ENCODE measurements at regions of chr5 and their contacts with region 1.

Region 1: DNA sequence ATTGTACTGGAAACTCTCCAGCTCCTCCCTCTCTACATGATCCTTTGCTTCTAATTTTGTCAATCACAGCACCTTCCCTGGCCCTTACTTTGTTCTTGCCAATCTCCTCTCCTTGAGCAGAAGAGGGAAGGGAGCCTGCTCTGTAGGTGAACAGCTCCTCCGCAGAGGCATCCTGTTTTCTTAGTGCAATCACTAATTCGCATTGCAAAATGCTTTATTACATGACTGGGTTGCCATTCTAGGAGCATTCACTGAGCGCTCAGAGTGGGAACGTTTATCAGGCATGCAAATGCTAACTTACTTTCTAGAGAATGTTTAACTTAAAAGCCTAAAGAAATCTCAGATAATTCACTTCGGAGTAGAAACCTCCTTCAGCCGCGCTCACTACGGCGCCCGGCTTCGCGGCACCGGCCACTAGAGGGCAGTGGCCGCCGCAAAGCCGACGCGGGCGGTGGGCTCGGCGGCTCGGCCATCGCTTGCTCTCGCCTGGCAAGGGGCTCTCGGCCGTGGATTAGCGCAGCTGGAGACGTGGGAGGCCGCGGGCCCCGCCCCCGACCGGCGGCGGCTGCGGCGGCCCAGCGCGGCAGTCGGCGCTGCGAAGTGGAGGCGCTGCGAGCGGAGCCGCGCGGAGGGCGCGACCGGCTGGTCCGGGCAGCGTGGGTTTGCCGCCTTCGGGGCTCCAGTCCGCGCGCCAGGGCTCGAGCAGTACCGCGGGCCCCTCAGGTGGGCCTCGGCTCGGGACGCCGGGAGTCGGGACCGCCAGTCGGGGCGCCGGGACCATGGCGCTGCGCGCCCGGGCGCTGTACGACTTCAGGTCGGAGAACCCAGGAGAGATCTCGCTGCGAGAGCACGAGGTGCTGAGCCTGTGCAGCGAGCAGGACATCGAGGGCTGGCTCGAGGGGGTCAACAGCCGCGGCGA is at the start of gene SNX18:
- DNase-seq: peak; percentile 94 to 96 (median 95)
- ATAC-seq: peak; percentile 82 to 94 (median 92)
- H3K4me3 ChIP-seq: peak within 1 kb of the TSS; percentile 88 to 100 (median 97)
- H3K27ac ChIP-seq: peak within 1 kb of the TSS; percentile 95 to 99 (median 98)
- H3K4me1 ChIP-seq: peaks cover 0 to 45% (median 26%) of the 10 kb centered on the region in 12 donors
- H3K27me3 ChIP-seq: no peaks in the 10 kb centered on the region
- CTCF ChIP-seq: peak; percentile 95 to 100 (median 98)
- POLR2A ChIP-seq: peak in 1 of 2 donors; percentile 78
- total RNA-seq, gene SNX18: 18.8 to 39.6 (median 23.4) TPM

Region 2: DNA sequence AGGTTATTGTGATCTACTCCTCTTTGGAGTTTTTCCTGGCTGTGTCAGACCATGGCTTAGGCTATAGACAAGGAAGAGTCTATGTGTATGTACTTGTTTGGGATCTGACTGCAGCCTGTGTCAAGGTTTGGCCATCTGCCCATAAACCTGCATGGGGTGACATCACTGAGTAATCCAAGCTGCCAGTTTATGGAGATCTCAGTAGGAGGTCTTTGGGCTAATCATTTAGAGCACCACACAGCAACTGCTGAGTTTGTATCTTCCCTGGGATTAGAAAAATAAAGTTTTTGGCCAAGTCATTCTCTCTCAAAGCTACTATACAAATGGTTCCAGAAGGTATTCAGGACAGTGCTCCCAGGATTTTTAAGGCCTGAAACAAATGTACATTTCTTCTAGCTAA is 127.4 kb before region 1 on chr5:
- intact Hi-C with region 1: no loop called
- DNase-seq: peak in 2 of 5 donors; percentile 12 to 41
- ATAC-seq: peak in 1 of 4 donors; percentile 37
- H3K4me3 ChIP-seq: no peak overlapping the region
- H3K27ac ChIP-seq: peak overlapping the region in 2 of 12 donors; percentile 16 to 66
- H3K4me1 ChIP-seq: peaks cover 0 to 48% (median 14%) of the 10 kb centered on the region in 12 donors
- H3K27me3 ChIP-seq: no peaks in the 10 kb centered on the region
- CTCF ChIP-seq: no peak
- POLR2A ChIP-seq: no peak

Region 3: DNA sequence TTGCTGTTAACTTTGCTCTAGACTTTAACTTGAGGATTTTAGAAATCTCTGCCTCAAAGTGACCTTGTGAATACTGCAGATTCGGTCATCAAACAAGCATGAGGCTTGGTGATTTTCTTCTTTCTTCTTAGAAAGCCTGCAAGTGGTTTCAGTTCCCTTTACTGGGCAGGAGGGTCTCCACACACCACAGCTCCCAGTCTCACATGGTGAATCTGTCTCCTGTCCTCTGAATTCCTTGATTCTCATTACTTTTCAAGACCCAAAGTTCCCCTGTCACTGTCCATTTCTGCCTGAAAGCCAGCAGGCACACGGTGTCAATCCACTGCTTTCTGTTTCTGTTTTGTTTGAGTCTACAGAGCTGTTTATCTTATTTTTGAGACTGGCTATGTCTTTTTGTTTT is 47.8 kb before region 1 on chr5:
- intact Hi-C with region 1: no loop called
- DNase-seq: no peak
- ATAC-seq: peak in 2 of 4 donors; percentile 38 to 47
- H3K4me3 ChIP-seq: peak overlapping the region in 9 of 12 donors; percentile 1 to 52 (median 33)
- H3K27ac ChIP-seq: peak overlapping the region in 10 of 12 donors; percentile 25 to 70 (median 52)
- H3K4me1 ChIP-seq: peaks cover 0 to 30% (median 12%) of the 10 kb centered on the region in 12 donors
- H3K27me3 ChIP-seq: no peaks in the 10 kb centered on the region
- CTCF ChIP-seq: no peak
- POLR2A ChIP-seq: no peak

Region 4: DNA sequence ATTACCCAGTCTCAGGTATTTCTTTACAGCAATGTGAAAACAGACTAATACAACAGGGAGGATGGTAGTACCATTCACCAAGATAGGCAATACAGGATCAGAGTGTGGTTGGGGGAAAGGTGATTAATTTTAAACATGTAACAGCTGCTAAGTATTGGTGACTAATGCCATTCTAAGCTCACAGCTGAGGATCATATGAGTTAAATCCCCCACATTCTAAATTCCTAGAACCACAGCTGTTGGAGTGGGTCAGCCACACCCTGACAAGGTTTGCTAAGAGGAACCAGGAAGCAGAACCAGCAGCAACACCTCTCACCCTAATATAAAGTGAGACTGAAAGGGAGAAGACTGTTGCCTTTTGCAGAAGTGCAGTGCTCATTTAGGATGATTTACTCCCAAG is 37.1 kb before region 1 on chr5:
- intact Hi-C with region 1: no loop called
- DNase-seq: no peak
- ATAC-seq: no peak
- H3K4me3 ChIP-seq: no peak overlapping the region
- H3K27ac ChIP-seq: no peak overlapping the region
- H3K4me1 ChIP-seq: peaks cover 0 to 2% (median 0%) of the 10 kb centered on the region in 12 donors
- H3K27me3 ChIP-seq: no peaks in the 10 kb centered on the region
- CTCF ChIP-seq: no peak
- POLR2A ChIP-seq: no peak

Region 5: GRCh38 chr5:54558362-54558761 is 40.9 kb after region 1 on chr5:
- intact Hi-C with region 1: loop called in 1 of 10 experiments (anchors 5 kb)
- DNase-seq: no peak
- ATAC-seq: peak; percentile 51 to 92 (median 68)
- H3K4me3 ChIP-seq: no peak overlapping the region
- H3K27ac ChIP-seq: peak overlapping the region in 10 of 12 donors; percentile 3 to 37 (median 8)
- H3K4me1 ChIP-seq: peaks cover 0 to 13% (median 0%) of the 10 kb centered on the region in 12 donors
- H3K27me3 ChIP-seq: no peaks in the 10 kb centered on the region
- CTCF ChIP-seq: no peak
- POLR2A ChIP-seq: no peak

Region 6: GRCh38 chr5:54658014-54658413 is 140.6 kb after region 1 on chr5:
- intact Hi-C with region 1: loop called in 2 of 10 experiments (anchors 5 kb)
- DNase-seq: peak in 2 of 5 donors; percentile 49 to 61
- ATAC-seq: peak in 1 of 4 donors; percentile 67
- H3K4me3 ChIP-seq: no peak overlapping the region
- H3K27ac ChIP-seq: peak overlapping the region in 2 of 12 donors; percentile 17 to 41
- H3K4me1 ChIP-seq: peaks cover 0 to 25% (median 9%) of the 10 kb centered on the region in 12 donors
- H3K27me3 ChIP-seq: no peaks in the 10 kb centered on the region
- CTCF ChIP-seq: no peak
- POLR2A ChIP-seq: no peak

Region 7: GRCh38 chr5:54719384-54720283 is 202.2 kb after region 1 on chr5:
- intact Hi-C with region 1: loop called in 3 of 10 experiments (anchors 5 kb)
- DNase-seq: peak in 4 of 5 donors; percentile 53 to 81 (median 66)
- ATAC-seq: peak; percentile 85 to 93 (median 90)
- H3K4me3 ChIP-seq: no peak overlapping the region
- H3K27ac ChIP-seq: peak overlapping the region; percentile 46 to 89 (median 71)
- H3K4me1 ChIP-seq: peaks cover 0 to 35% (median 23%) of the 10 kb centered on the region in 12 donors
- H3K27me3 ChIP-seq: no peaks in the 10 kb centered on the region
- CTCF ChIP-seq: peak in 1 of 12 donors; percentile 20
- POLR2A ChIP-seq: no peak

Region 8: GRCh38 chr5:54774281-54775170 is 257.1 kb after region 1 on chr5:
- intact Hi-C with region 1: loop called in 1 of 10 experiments (anchors 10 kb)
- DNase-seq: peak; percentile 66 to 84 (median 72)
- ATAC-seq: peak; percentile 88 to 97 (median 95)
- H3K4me3 ChIP-seq: peak overlapping the region in 2 of 12 donors; percentile 7 to 20
- H3K27ac ChIP-seq: peak overlapping the region in 4 of 12 donors; percentile 45 to 62 (median 47)
- H3K4me1 ChIP-seq: peaks cover 0 to 15% (median 0%) of the 10 kb centered on the region in 12 donors
- H3K27me3 ChIP-seq: no peaks in the 10 kb centered on the region
- CTCF ChIP-seq: no peak
- POLR2A ChIP-seq: no peak

Region 9: DNA sequence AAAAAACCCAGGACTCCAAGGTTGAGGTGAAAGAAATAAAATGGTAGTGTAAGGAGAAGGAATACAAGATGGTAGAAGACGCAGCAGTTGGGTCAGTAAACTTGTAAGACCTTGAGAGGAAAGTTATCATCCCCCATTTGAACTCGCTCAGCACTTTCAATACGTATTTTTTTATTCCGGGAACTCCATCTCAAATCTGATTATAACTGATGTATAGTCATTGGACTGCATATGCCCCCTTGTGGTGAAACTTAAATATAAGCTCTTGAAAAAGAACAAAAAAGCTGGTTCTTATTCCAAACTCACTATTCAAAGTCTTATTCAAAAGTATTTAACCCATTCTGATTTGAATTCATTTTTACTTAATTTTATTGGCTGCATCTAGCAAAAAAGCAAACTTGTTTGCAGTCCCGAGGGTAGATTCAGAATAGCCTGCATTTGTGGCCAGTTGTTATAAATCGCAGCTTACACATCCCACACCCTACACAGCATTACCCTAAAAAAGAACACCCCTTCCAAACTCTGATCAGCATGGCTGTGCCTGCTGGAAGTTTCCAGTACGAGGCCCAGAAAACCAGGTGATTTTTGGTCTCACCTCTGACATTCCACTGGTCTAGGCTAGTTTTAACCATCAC is 350.0 kb after region 1 on chr5:
- intact Hi-C with region 1: loop called in 9 of 10 experiments (anchors 1 to 5 kb)
- DNase-seq: no peak
- ATAC-seq: peak in 2 of 4 donors; percentile 36 to 45
- H3K4me3 ChIP-seq: peak overlapping the region in 7 of 12 donors; percentile 4 to 46 (median 19)
- H3K27ac ChIP-seq: no peak overlapping the region
- H3K4me1 ChIP-seq: peaks cover 0 to 7% (median 0%) of the 10 kb centered on the region in 12 donors
- H3K27me3 ChIP-seq: no peaks in the 10 kb centered on the region
- CTCF ChIP-seq: peak; percentile 58 to 78 (median 74)
- POLR2A ChIP-seq: no peak

Region 10: GRCh38 chr5:55159763-55160492 is 642.5 kb after region 1 on chr5 and contains the start of gene GPX8:
- intact Hi-C with region 1: loop called in 2 of 10 experiments (anchors 10 kb)
- DNase-seq: peak in 2 of 5 donors; percentile 22 to 27
- ATAC-seq: peak; percentile 55 to 90 (median 86)
- H3K4me3 ChIP-seq: peak within 1 kb of the TSS; percentile 2 to 63 (median 48)
- H3K27ac ChIP-seq: peak within 1 kb of the TSS in 11 of 12 donors; percentile 14 to 72 (median 55)
- H3K4me1 ChIP-seq: peaks cover 0 to 6% (median 4%) of the 10 kb centered on the region in 12 donors
- H3K27me3 ChIP-seq: peaks cover 0 to 9% (median 0%) of the 10 kb centered on the region in 9 donors
- CTCF ChIP-seq: peak; percentile 31 to 72 (median 56)
- POLR2A ChIP-seq: no peak
- total RNA-seq, gene GPX8: 3.9 to 16.1 (median 5.1) TPM